GM10248 (cell line): ENCODE measurements at regions of chr21 and their contacts with region 1.

Region 1: GRCh38 chr21:42145569-42146272 is 73.2 kb upstream of the ABCG1 start:
- DNase-seq: peak; percentile 88
- CTCF ChIP-seq: peak; percentile 89

Region 2: DNA sequence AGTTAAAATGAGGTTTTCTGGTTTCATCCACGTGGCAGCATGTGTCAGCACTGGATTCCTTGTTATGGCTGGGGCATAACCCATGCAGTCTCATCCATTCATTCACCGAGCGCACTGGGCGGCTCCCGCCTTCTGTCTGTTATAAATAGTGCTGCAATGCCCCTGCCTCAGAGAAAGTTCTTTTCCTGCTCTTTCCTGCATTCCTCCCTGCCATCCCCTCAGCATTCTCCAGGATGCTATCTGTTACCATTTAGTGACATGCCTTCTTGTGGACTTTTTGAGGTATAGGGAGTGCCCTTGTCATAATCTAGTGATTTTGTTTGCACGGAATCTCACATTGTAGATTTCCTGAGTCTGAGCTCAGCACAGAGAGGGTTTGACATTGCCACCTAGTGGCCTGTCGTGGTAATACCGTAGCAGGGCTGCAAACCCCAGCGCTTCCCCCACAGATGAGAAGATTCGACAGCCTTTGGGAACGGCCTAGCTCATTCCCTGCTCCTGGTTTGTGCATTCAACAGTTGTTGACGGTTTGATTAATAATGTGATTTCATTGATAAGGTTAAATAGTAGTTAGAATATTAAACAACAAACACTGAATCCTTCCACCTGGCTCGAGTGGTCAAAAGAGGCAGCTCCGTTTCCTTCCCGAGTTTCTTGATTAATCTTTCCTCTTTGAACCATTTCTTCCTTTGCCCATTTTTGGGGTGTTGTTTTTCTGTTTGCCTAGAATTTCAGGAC is 28.3 kb before region 1 on chr21:
- CTCF ChIA-PET with region 1: interaction called, 12 read pairs
- POLR2A ChIA-PET with region 1: no interaction called
- DNase-seq: peak; percentile 84
- CTCF ChIP-seq: peak; percentile 85

Region 3: GRCh38 chr21:42125571-42126544 is 19.9 kb before region 1 on chr21:
- CTCF ChIA-PET with region 1: interaction called, 16 read pairs
- POLR2A ChIA-PET with region 1: no interaction called
- DNase-seq: no peak
- CTCF ChIP-seq: no peak

Region 4: GRCh38 chr21:42135386-42136052 is 10.2 kb before region 1 on chr21:
- CTCF ChIA-PET with region 1: interaction called, 10 read pairs
- POLR2A ChIA-PET with region 1: no interaction called
- DNase-seq: no peak
- CTCF ChIP-seq: no peak

Region 5: GRCh38 chr21:42164064-42164789 is 18.5 kb after region 1 on chr21:
- CTCF ChIA-PET with region 1: interaction called, 16 read pairs
- POLR2A ChIA-PET with region 1: no interaction called
- DNase-seq: peak; percentile 78
- CTCF ChIP-seq: peak; percentile 87

Region 6: GRCh38 chr21:42238185-42238934 is 92.6 kb after region 1 on chr21:
- CTCF ChIA-PET with region 1: interaction called, 10 read pairs
- POLR2A ChIA-PET with region 1: no interaction called
- DNase-seq: no peak
- CTCF ChIP-seq: no peak

Region 7: GRCh38 chr21:42449296-42449927 is 303.7 kb after region 1 on chr21:
- CTCF ChIA-PET with region 1: interaction called, 11 read pairs
- POLR2A ChIA-PET with region 1: no interaction called
- DNase-seq: no peak
- CTCF ChIP-seq: no peak